CD8-positive, alpha-beta T cell (primary cell): ENCODE measurements at regions of chr9 and their contacts with region 1.

Region 1: GRCh38 chr9:6153425-6153824 is 62.2 kb upstream of the IL33 start:
- DNase-seq: no peak
- ATAC-seq: no peak
- H3K4me3 ChIP-seq: no peak overlapping the region
- H3K4me3 Mint-ChIP-seq: no peak overlapping the region
- H3K27ac ChIP-seq: no peak overlapping the region
- H3K27ac Mint-ChIP-seq: no peak overlapping the region
- H3K4me1 ChIP-seq: no peaks in the 10 kb centered on the region
- H3K4me1 Mint-ChIP-seq: no peaks in the 10 kb centered on the region
- H3K27me3 ChIP-seq: peaks cover 0 to 2% of the 10 kb centered on the region in 2 experiments
- H3K27me3 Mint-ChIP-seq: peaks cover 8% of the 10 kb centered on the region
- CTCF ChIP-seq: no peak

Region 2: DNA sequence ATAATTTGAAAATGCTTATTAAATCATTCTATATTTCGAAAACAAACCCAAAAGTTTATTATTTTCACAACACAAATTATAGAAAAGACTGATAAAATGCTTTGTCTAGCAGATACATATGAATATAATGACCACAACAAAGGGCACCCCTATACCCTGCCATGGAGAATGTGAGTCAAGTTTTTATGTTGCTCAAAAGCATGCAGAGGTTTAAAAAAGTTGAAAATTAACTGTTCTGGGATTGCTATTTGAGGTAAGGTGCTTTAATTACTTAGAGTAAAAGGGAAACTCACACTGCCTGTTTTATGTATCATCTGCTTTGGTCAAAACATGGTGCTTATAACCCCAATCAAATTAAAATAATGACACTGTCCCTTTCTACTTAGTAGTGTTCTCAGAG is 221.8 kb before region 1 on chr9:
- CTCF ChIA-PET with region 1: no interaction called
- POLR2A ChIA-PET with region 1: no interaction called
- intact Hi-C with region 1: no loop called
- DNase-seq: no peak
- ATAC-seq: no peak
- H3K4me3 ChIP-seq: no peak overlapping the region
- H3K4me3 Mint-ChIP-seq: no peak overlapping the region
- H3K27ac ChIP-seq: no peak overlapping the region
- H3K27ac Mint-ChIP-seq: no peak overlapping the region
- H3K4me1 ChIP-seq: no peaks in the 10 kb centered on the region
- H3K4me1 Mint-ChIP-seq: no peaks in the 10 kb centered on the region
- H3K27me3 ChIP-seq: no peaks in the 10 kb centered on the region
- H3K27me3 Mint-ChIP-seq: no peaks in the 10 kb centered on the region
- CTCF ChIP-seq: no peak

Region 3: GRCh38 chr9:6194934-6195333 is 41.5 kb after region 1 on chr9:
- CTCF ChIA-PET with region 1: no interaction called
- POLR2A ChIA-PET with region 1: no interaction called
- intact Hi-C with region 1: loop called in 1 of 2 experiments (anchors 5 kb)
- DNase-seq: no peak
- ATAC-seq: no peak
- H3K4me3 ChIP-seq: no peak overlapping the region
- H3K4me3 Mint-ChIP-seq: no peak overlapping the region
- H3K27ac ChIP-seq: no peak overlapping the region
- H3K27ac Mint-ChIP-seq: no peak overlapping the region
- H3K4me1 ChIP-seq: no peaks in the 10 kb centered on the region
- H3K4me1 Mint-ChIP-seq: no peaks in the 10 kb centered on the region
- H3K27me3 ChIP-seq: no peaks in the 10 kb centered on the region
- H3K27me3 Mint-ChIP-seq: peaks cover 21% of the 10 kb centered on the region
- CTCF ChIP-seq: no peak